SK-N-SH (cell line): ENCODE measurements at regions of chr15 and their contacts with region 1.

Region 1: DNA sequence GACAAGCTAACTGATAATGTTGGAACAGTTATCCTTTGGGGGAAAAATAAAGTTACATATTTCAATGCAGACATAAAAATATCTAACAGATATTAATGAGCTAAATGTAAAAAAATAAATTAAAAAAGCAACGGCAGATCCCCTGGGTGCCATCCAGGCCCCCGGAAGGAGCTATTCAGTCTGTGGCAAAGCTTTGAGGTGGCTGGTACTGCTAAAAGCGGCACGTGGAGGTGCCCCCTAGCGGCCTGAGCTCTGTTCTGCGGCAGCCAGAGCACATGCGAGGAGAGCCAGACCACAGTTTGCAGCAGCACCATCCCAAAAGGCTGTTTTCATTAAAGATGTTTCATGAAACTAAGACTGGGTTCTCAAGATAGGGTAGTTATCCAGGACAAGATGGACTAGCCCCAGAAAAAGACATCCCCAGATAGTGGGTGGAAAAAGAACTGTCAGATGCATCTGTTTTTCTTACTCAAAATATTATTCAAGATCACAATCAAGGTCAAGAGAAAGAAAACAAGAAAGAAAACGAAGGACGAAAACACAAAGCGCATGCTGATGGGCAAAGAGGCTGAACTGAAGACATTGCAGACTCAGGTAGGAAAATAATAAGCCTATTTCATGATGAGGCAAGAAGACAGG is 18.7 kb downstream of the AP3S2 start:
- DNase-seq: peak; percentile 86
- H3K4me3 ChIP-seq: no peak overlapping the region
- H3K27ac ChIP-seq: no peak overlapping the region; a peak in 1 of 4 replicates
- H3K4me1 ChIP-seq: no peaks in the 10 kb centered on the region
- H3K27me3 ChIP-seq: no peaks in the 10 kb centered on the region
- CTCF ChIP-seq: peak; percentile 98
- EP300 ChIP-seq: no peak
- RAD21 ChIP-seq: peak; percentile 85

Region 2: DNA sequence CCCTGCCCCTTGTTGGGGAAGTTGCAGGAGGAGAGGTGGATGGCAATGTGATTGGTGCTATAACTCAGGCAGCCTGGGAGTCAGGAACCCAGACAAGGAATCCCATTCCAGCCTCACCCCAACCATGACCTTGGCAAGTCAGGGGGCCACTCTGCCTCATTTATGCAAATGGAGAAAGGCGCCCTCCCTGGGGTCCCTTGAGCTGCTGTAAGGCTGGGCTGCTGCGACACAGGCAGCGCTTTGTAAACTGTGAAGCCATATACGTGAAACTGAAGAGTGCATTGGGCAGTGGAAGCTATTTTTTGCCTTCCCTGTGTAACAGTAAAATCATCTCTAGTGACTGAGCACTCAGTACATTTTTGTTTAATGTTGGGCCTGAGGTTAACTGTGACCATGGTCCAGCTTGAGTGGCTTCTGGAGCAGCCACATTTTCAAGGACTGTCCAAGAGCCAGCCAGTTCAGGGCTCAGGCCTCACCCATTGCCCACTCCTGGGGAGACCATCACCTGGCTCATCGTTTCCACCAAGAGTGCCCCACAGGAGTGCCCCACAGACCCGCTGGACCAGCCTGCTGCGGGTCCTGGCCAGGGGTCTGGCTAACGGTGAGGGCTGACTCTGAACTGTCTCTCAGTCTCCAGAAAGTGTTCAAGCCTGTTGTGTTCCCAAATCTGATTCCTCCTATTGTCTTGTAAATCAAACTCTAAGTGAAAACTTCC is 247.6 kb before region 1 on chr15:
- CTCF ChIA-PET with region 1: no interaction called
- POLR2A ChIA-PET with region 1: no interaction called
- DNase-seq: peak; percentile 23
- H3K4me3 ChIP-seq: no peak overlapping the region
- H3K27ac ChIP-seq: no peak overlapping the region
- H3K4me1 ChIP-seq: no peaks in the 10 kb centered on the region
- H3K27me3 ChIP-seq: no peaks in the 10 kb centered on the region
- CTCF ChIP-seq: no peak
- EP300 ChIP-seq: no peak
- RAD21 ChIP-seq: no peak

Region 3: DNA sequence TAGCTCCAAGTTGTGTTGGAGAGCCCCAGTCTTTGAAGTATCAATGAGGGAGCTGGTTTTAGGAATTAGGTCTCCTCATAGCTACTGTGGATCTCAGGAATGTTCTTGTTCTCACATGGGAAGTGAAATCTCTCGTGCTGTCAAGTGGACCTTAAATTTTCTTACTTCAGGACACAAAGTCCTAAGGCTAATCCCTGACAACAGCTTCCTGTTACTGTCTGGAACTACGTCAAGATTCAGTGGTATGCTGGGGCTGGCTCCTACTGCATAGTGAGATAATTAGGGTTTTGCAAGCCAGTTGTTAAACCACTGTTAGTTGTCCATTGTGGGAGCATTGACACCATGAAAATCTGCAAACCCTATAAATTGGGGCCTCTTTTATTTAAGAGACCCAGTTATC is 146.8 kb before region 1 on chr15:
- CTCF ChIA-PET with region 1: interaction called, 11 read pairs
- POLR2A ChIA-PET with region 1: no interaction called
- DNase-seq: no peak
- H3K4me3 ChIP-seq: no peak overlapping the region
- H3K27ac ChIP-seq: no peak overlapping the region
- H3K4me1 ChIP-seq: no peaks in the 10 kb centered on the region
- H3K27me3 ChIP-seq: peaks cover 14% of the 10 kb centered on the region
- CTCF ChIP-seq: no peak
- EP300 ChIP-seq: no peak
- RAD21 ChIP-seq: no peak

Region 4: GRCh38 chr15:89750560-89751542 is 124.2 kb before region 1 on chr15 and contains the start of gene MESP1:
- CTCF ChIA-PET with region 1: interaction called, 45 read pairs
- POLR2A ChIA-PET with region 1: no interaction called
- DNase-seq: peak; percentile 98
- H3K4me3 ChIP-seq: peak within 1 kb of the TSS; percentile 56 to 75
- H3K27ac ChIP-seq: peak within 1 kb of the TSS in 1 of 2 experiments; percentile 40; a peak in 1 of 4 replicates
- H3K4me1 ChIP-seq: peaks cover 0 to 12% of the 10 kb centered on the region in 2 experiments; a peak in 1 of 4 replicates
- H3K27me3 ChIP-seq: no peaks in the 10 kb centered on the region
- CTCF ChIP-seq: peak; percentile 58
- EP300 ChIP-seq: no peak; a peak in 1 of 4 replicates
- RAD21 ChIP-seq: peak; percentile 56
- polyA plus RNA-seq, gene MESP1: 0.52 and 0.74 TPM in 2 replicates

Region 5: DNA sequence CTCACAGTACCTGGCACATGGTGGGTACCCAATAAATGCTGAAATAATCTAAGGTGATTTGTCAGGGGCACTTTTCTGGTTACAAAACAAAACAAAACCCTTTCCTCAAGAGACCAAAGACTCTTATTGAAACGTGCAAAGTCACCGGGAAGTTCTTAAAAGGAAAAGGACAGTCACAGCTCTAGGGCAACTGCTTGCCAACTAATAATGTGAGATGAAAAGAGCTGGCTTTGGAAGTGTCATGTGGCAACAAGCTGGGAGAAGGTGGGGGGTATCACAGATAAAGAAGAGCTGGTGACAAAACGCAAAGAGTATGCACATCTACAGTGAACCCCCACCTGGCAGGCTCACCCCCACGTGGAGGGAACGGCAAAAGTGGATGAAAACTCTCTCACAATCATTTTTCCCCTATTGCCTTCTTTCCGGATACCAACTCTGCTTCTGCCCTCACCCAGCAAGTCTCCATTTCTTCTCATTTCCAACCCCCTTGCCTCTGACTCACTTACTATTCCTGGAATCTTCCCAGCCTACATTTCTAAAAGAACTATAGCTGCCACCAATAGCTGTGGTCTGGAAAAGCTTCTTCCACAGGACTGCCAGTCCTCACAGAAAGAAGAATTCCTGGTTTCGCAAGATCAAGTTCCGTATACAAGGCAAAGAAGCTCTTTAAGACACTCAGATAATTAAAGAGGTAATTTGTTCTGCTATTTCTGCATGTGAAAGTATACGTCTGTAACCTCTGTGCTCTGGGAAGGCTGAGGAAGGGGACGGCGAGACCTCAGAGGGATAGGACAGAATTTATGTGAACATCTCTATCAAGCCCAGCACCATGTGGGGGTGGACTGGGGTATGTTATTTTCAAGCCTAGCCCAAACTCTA is 38.6 kb before region 1 on chr15:
- CTCF ChIA-PET with region 1: interaction called, 13 read pairs
- POLR2A ChIA-PET with region 1: no interaction called
- DNase-seq: no peak
- H3K4me3 ChIP-seq: peak overlapping the region in 1 of 2 experiments; percentile 6; a peak in 1 of 4 replicates
- H3K27ac ChIP-seq: peak overlapping the region; percentile 87 to 95
- H3K4me1 ChIP-seq: peaks cover 0 to 21% of the 10 kb centered on the region in 2 experiments; a peak in 2 of 4 replicates
- H3K27me3 ChIP-seq: no peaks in the 10 kb centered on the region
- CTCF ChIP-seq: no peak
- EP300 ChIP-seq: 0 out of 4 replicates have a peak, but pooled peaks of 1 of the 2 experiments have one; percentile 44
- RAD21 ChIP-seq: no peak

Region 6: GRCh38 chr15:89863918-89864317 is 11.1 kb before region 1 on chr15:
- CTCF ChIA-PET with region 1: interaction called, 20 read pairs
- POLR2A ChIA-PET with region 1: no interaction called
- DNase-seq: no peak
- H3K4me3 ChIP-seq: no peak overlapping the region
- H3K27ac ChIP-seq: no peak overlapping the region
- H3K4me1 ChIP-seq: peaks cover 0 to 2% of the 10 kb centered on the region in 2 experiments; a peak in 1 of 4 replicates
- H3K27me3 ChIP-seq: no peaks in the 10 kb centered on the region
- CTCF ChIP-seq: no peak
- EP300 ChIP-seq: no peak
- RAD21 ChIP-seq: no peak

Region 7: GRCh38 chr15:90057946-90058707 is 183.1 kb after region 1 on chr15:
- CTCF ChIA-PET with region 1: no interaction called
- POLR2A ChIA-PET with region 1: no interaction called
- DNase-seq: no peak
- H3K4me3 ChIP-seq: no peak overlapping the region
- H3K27ac ChIP-seq: no peak overlapping the region
- H3K4me1 ChIP-seq: peaks cover 0 to 20% of the 10 kb centered on the region in 2 experiments; a peak in 1 of 4 replicates
- H3K27me3 ChIP-seq: no peaks in the 10 kb centered on the region
- CTCF ChIP-seq: no peak
- EP300 ChIP-seq: no peak
- RAD21 ChIP-seq: no peak